ENCODE measurements at regions of chr17 and their contacts with region 1.

Region 1: DNA sequence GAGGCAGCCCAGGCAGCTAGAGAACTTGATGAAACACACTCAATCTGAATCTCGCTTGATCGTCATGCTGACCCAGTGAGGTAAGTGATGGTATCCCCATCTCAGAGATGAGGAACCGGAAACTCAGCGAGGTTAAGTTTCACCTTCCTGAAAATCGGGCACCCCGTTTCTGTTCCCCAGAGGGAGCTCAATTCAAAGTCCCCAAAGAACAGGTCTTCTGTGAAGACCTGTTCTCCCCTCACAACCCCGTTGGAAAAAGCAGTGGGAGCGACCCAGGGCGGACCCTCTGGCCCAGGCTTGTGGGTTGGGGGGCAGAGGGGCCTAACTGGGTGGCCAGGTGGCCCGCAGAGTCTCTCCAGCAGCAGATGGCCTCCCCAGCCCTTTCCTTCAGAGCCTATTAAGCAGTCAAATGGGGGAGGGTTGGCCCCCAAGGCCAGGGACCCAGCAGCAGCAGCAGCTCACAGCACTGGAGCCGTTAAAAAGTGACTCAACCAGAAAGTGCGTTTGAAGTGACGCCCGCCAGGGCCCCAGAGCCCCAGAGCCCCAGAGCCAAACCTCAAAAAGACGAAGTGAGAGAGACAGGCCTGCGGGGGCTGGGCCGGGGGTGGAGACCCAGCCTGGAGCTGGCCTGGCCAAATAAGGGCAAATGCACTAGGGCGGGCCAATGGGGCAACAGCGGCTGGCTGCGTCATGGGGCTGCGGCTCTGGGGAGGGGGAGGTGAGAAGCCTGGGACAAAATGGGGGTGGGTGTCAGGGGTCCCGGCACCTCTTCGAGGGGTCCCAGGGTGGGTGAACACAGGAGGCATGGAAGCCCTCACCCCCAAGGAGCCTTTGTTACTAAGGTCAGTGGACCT is 9.2 kb upstream of the TSPOAP1 start:
- DNase-seq: peak; percentile 98
- H3K4me3 Mint-ChIP-seq: peak overlapping the region; percentile 91
- H3K27ac Mint-ChIP-seq: peak overlapping the region; percentile 100
- H3K4me1 Mint-ChIP-seq: peaks cover 59% of the 10 kb centered on the region
- H3K27me3 Mint-ChIP-seq: no peaks in the 10 kb centered on the region

Region 2: GRCh38 chr17:58352014-58352842 is 14.4 kb after region 1 on chr17 and contains the start of gene SUPT4H1:
- intact Hi-C with region 1: loop called (anchors 2 kb)
- DNase-seq: peak; percentile 97
- H3K4me3 Mint-ChIP-seq: peak within 1 kb of the TSS; percentile 100
- H3K27ac Mint-ChIP-seq: peak within 1 kb of the TSS; percentile 99
- H3K4me1 Mint-ChIP-seq: peaks cover 45% of the 10 kb centered on the region
- H3K27me3 Mint-ChIP-seq: no peaks in the 10 kb centered on the region
- total RNA-seq, gene SUPT4H1: 139 and 143 TPM in 2 replicates

Region 3: DNA sequence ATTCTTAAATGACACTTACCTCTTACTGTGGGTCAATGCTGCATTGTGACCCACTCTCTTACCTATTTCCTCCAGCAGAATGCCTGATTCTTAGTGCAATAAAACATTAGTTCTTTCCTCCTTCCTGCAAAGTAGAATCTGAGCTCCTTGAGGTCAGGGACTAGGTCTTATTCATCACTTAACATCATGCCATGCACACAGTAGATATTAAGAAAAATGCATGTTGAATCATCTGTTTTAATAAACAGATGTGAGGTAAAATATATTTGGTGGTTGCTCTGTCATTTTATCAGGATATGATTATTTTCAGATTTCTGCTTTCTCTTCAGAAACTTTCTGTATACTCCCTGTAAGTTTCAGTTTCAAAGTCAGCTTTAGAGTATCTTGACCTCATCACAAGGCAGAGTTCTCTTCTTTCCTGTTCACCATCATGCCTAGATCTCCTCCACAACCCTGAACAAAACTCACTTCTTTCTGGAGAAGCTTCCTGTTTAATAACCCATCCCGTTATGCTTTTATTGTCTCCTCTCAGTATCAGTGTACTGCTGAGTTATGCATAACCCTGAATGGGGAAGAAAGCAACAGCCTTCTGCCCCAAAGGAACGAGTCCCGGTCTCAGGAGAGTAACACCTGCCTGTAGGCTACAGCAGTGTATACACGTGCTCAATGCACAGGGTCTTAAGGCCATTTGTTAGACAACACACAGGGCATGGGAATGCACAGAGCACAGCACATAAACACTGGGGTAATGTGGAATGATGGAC is 44.5 kb after region 1 on chr17:
- intact Hi-C with region 1: no loop called
- DNase-seq: peak; percentile 67
- H3K4me3 Mint-ChIP-seq: peak overlapping the region; percentile 37
- H3K27ac Mint-ChIP-seq: peak overlapping the region; percentile 68
- H3K4me1 Mint-ChIP-seq: peaks cover 45% of the 10 kb centered on the region
- H3K27me3 Mint-ChIP-seq: no peaks in the 10 kb centered on the region

Region 4: DNA sequence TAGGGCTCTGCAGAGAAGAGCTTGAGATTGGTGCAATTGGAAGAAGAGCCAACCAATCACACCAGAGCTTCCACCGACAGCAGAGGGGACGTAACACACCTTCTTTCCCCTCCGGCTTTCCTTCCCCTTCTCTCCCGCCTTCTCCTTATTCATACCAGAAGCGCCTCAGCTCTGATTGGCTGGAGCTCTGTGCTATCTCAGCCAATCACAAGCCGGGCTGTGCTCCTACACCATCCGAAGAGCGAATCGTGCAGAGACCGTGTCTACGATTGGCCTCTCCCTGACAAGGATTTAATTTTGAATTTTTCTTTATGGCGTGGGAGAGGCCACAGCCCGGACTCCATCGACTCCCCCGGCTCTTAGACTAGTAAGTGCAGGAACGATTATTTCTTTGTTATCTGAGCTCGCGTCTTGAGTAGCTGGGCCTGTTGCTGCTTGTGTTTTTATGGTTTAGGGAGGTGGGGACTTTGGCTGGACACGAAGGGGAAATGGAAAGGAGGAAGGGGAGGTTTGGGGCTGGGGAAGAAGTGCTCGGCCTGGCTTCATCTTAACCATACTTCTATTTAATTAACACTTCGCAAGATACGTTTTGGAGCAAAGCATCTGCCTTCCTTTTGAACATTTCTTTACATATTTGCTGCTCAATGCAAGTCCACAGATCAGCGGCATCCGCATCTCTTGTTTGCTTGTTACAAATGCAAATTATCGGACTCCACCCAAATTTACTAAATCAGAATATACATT is 817.8 kb after region 1 on chr17 and contains the start of gene PRR11:
- intact Hi-C with region 1: loop called (anchors 10 kb)
- DNase-seq: peak; percentile 98
- H3K4me3 Mint-ChIP-seq: no peak within 1 kb of the TSS
- H3K27ac Mint-ChIP-seq: no peak within 1 kb of the TSS
- H3K4me1 Mint-ChIP-seq: peaks cover 44% of the 10 kb centered on the region
- H3K27me3 Mint-ChIP-seq: no peaks in the 10 kb centered on the region
- total RNA-seq, gene PRR11: 29.7 and 32.6 TPM in 2 replicates

Region 5: DNA sequence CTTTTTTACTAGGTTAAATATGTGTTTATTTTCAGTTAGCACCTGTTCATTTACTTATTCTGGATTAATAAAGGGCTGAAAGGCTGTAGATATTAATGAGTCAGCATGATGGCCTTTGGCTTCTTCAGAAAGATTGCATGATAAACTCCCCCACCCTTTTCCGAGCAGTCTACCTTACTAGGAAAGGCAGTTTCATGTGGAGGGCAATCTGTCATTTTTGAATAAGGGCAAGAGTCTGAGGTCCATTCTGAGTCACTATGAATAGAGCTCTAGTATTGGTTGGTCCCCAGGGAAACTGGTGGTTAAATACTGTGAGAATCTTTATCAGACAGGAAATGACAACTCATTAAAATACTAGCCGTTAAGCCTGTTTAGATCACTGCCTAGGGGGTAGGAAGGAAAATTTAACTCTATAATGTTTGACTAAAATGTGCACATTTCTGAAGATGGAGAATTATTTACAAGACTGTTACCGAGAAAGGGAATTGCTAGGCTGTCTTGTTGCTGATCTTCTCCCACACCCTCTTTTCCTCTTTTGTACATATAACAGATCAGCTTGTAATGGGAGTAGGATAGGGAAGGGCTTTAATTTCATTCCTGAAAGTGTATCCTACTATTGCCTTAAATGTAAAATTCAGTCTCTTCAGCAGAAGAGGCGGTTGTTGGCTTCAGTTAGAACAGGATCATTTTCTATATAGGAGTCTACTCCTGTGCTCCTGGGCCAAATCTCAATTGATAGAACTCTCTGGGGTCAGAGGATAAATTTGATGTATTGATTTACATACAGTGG is 1491.6 kb after region 1 on chr17:
- intact Hi-C with region 1: loop called (anchors 5 kb)
- DNase-seq: peak; percentile 89
- H3K4me3 Mint-ChIP-seq: peak overlapping the region; percentile 86
- H3K27ac Mint-ChIP-seq: peak overlapping the region; percentile 97
- H3K4me1 Mint-ChIP-seq: peaks cover 72% of the 10 kb centered on the region
- H3K27me3 Mint-ChIP-seq: no peaks in the 10 kb centered on the region